ENCODE measurements at regions of chr3 and their contacts with region 1.

Region 1: GRCh38 chr3:12886106-12886679 is 44.8 kb upstream of the RPL32 start:
- DNase-seq: no peak
- H3K4me3 ChIP-seq: no peak overlapping the region
- H3K4me3 Mint-ChIP-seq: peak overlapping the region; percentile 33 to 63 (median 46)
- H3K27ac ChIP-seq: no peak overlapping the region
- H3K27ac Mint-ChIP-seq: no peak overlapping the region
- H3K4me1 ChIP-seq: peaks cover 11% of the 10 kb centered on the region
- H3K4me1 Mint-ChIP-seq: peaks cover 9 to 14% (median 12%) of the 10 kb centered on the region in 4 donors
- H3K27me3 ChIP-seq: no peaks in the 10 kb centered on the region
- H3K27me3 Mint-ChIP-seq: peaks cover 28 to 32% of the 10 kb centered on the region in 2 donors

Region 2: DNA sequence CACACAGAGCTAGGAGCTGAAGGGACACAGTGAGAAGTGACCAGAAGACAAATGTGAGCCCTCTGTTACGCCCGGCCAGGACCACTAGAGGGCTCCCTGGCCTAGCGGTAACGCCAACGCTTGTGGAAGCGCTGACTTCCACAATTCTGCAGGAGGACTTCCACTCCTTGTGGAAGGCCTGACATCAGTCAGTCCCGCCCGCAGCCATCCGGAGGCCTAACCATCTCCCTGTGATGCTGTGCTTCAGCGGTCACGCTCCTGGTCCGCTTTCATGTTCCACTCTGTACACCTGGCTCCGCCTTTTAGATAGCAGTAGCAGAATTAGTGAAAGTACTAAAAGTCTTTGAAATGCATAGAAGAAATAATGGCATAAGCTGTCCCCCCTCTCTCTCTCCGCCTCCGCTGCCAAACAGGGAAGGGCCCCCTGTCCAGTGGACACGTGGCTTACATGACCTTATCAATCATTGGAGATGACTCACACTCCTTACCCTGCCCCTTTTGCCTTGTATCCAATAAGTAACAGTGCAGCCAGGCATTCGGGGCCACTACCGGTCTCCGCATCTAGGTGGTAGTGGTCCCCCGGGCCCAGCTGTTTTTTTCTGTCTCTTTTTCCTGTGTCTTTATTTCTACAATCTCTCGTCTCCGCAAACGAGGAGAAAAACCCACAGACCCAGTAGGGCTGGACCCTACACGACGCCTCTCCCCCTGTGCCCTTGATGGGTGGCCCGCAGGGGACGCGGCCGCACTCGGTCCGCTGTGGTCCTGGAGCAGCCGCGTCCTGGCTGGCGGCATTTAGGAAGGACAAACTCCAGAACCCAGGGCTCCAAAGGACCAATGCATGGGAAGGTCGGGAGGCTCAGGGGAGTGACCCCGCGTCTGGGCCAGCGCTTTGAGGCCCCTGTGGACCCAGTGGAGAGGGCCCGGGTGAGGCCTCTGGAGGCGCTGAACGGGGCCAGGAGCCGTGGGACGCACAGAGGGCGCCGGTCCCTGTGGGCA is 17.9 kb before region 1 on chr3:
- CTCF ChIA-PET with region 1: interaction called, 38 read pairs
- POLR2A ChIA-PET with region 1: no interaction called
- intact Hi-C with region 1: no loop called
- DNase-seq: peak; percentile 42 to 71 (median 56)
- H3K4me3 ChIP-seq: peak overlapping the region; percentile 22 to 36
- H3K4me3 Mint-ChIP-seq: peak overlapping the region; percentile 72 to 92 (median 88)
- H3K27ac ChIP-seq: no peak overlapping the region
- H3K27ac Mint-ChIP-seq: peak overlapping the region in 2 of 7 donors; percentile 10 to 19
- H3K4me1 ChIP-seq: peaks cover 13% of the 10 kb centered on the region
- H3K4me1 Mint-ChIP-seq: peaks cover 7 to 23% (median 11%) of the 10 kb centered on the region in 4 donors
- H3K27me3 ChIP-seq: no peaks in the 10 kb centered on the region
- H3K27me3 Mint-ChIP-seq: peaks cover 9 to 15% of the 10 kb centered on the region in 2 donors

Region 3: DNA sequence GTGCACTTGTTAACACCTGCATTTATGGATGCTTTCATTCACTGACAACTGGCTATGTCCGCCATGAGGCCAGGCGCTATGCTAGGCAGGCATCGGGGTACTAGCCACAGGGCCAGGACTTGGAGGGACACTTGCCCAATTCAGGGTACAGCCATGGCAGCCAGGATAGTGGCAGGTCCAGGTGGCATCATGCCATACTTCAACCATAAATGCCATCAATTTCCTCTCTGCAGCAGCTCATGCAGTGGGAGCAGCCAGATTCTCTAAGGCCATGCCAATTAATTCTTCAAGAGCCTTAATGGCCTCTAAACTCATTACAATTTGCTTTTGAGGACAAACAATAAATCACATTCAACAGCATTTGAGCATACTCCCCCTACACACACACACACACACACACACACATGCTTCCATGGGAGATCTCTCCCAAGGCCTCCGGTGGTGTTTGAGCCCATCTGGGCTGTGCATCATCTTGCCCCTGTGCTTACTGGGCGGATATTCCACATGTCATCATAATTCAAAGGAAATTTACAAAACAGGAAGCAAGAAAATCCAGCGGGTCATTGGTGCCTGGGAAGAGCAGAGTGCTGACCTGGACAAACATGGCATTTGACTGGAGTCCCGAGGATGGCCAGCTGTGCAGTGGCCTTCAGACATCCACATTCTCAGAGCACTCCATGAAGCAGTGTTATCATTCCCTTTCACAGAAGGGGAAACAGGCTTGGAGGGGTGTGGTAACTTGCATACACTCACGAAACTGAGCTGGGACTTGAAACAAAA is 77.9 kb after region 1 on chr3:
- CTCF ChIA-PET with region 1: no interaction called
- POLR2A ChIA-PET with region 1: no interaction called
- intact Hi-C with region 1: no loop called
- DNase-seq: no peak
- H3K4me3 ChIP-seq: no peak overlapping the region
- H3K4me3 Mint-ChIP-seq: peak overlapping the region in 7 of 8 donors; percentile 11 to 75 (median 57)
- H3K27ac ChIP-seq: no peak overlapping the region
- H3K27ac Mint-ChIP-seq: peak overlapping the region in 5 of 7 donors; percentile 30 to 82 (median 71)
- H3K4me1 ChIP-seq: peaks cover 95% of the 10 kb centered on the region
- H3K4me1 Mint-ChIP-seq: peaks cover 64 to 96% (median 79%) of the 10 kb centered on the region in 4 donors
- H3K27me3 ChIP-seq: no peaks in the 10 kb centered on the region
- H3K27me3 Mint-ChIP-seq: no peaks in the 10 kb centered on the region